Cardiac septum (tissue), 1 donor: ENCODE measurements at regions of chr17 and their contacts with region 1.

Region 1: GRCh38 chr17:81101614-81102306 is 63.5 kb upstream of the PVALEF start:
- DNase-seq: peak; percentile 94

Region 2: DNA sequence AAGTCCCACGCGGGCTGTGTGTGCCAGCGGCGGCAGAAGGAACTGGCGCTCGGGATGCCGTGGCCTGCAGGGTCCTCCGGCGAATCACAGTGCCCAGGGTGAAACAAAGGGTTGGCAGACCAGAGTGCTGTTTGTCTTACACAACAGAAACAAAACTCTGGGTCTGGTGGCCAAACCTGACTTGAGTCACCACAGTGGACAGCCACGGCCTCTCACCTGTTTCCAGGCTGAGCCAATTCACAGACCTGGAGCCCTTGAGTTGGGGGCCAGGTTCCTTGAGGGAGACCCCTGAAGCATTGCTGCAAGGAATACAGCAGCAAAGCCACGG is 112.2 kb before region 1 on chr17:
- intact Hi-C with region 1: loop called (anchors 1 kb)
- DNase-seq: no peak

Region 3: GRCh38 chr17:81018044-81018802 is 83.5 kb before region 1 on chr17:
- intact Hi-C with region 1: loop called (anchors 1 kb)
- DNase-seq: peak; percentile 73

Region 4: GRCh38 chr17:81171941-81172340 is 70.2 kb after region 1 on chr17:
- intact Hi-C with region 1: no loop called
- DNase-seq: no peak